ENCODE measurements at regions of chr17 and their contacts with region 1.

Region 1: DNA sequence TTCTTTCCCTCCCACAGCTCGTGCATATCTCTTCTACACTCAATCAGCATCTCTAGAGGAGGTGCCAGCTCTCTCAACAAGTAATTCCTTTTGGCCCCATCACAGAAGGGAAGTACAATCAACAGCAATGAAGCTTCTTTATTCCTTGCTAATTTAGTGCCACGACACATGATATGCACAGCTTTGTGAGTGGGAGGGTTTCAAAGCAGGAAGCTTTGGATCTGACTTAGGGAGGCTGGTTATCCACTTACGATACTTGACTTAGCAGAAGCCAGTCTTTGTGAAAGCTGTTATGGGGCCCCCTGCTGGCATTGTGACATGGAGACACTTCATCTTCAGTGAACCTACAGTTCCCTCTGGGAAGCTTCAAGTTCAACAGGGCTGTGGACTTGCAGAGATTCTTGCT is 81.0 kb downstream of the TMEM100 start:
- DNase-seq: no peak
- ATAC-seq: no peak
- H3K4me3 ChIP-seq: no peak overlapping the region
- H3K27ac ChIP-seq: no peak overlapping the region
- H3K4me1 ChIP-seq: no peaks in the 10 kb centered on the region
- H3K27me3 ChIP-seq: no peaks in the 10 kb centered on the region
- CTCF ChIP-seq: peak; percentile 64

Region 2: DNA sequence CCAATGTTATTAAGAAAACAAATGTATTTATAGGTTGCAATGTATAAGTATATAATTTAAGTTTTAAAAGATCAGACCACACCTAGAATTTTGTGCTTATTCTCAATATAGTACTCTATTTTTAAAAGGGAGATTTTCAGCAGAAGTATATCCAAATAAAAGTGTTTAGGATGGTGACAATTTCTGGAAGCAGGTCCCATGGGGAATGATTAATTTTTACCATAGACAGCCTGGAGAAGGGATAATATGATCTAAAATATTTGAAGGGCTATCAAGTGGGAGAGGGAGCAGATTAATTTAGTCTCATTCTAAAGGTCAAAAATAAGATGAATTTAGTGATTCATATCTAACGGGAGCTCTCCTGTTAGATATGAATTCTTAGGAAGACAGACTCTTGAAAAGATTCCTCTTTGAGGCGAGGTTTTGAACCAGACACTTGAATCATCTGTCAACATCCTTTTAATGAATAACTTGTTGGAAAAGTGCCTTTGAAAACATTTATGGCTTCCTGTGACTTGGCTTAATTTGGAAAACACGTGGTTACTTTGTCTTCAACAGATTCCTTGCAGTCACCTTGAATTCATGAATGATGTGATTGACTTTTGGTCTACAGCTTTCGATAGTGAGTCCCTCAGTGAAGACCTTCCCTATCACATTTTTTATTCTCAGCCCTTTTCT is 101.1 kb before region 1 on chr17:
- CTCF ChIA-PET with region 1: no interaction called
- POLR2A ChIA-PET with region 1: no interaction called
- in situ Hi-C with region 1: no loop called
- intact Hi-C with region 1: no loop called
- DNase-seq: no peak
- ATAC-seq: no peak
- H3K4me3 ChIP-seq: no peak overlapping the region
- H3K27ac ChIP-seq: no peak overlapping the region
- H3K4me1 ChIP-seq: no peaks in the 10 kb centered on the region
- H3K27me3 ChIP-seq: no peaks in the 10 kb centered on the region
- CTCF ChIP-seq: no peak

Region 3: DNA sequence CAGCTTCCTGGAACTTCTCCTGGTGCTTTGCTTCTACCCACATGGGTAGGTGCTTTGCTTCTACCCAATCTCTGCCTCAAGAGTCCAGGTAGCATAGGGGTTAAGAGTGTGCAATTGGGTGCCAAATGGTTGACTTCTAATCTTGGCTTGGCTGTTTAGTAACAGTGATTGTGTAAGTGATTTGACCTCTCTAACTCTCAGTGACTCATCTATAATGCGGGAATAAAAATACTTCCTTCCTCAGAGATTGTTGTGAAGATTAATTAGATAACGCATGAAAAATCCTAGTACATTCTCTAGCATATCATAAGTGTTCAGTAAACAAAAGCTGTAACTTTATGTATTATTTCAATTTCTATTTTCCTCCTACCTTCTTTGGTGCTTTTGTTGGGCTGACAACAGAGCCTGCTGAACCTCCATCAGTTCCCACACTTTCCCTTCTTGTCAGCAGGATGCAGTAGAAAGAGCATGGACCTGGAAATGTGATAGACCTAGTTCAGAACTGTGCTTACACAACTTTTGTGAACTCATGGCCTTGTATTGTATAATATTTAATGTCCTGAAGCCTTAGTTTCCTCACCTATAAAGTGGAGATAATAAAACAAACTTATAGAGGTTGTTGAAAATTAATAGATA is 57.5 kb before region 1 on chr17:
- CTCF ChIA-PET with region 1: no interaction called
- POLR2A ChIA-PET with region 1: no interaction called
- in situ Hi-C with region 1: no loop called
- intact Hi-C with region 1: no loop called
- DNase-seq: no peak
- ATAC-seq: no peak
- H3K4me3 ChIP-seq: no peak overlapping the region
- H3K27ac ChIP-seq: no peak overlapping the region
- H3K4me1 ChIP-seq: no peaks in the 10 kb centered on the region
- H3K27me3 ChIP-seq: no peaks in the 10 kb centered on the region
- CTCF ChIP-seq: no peak

Region 4: DNA sequence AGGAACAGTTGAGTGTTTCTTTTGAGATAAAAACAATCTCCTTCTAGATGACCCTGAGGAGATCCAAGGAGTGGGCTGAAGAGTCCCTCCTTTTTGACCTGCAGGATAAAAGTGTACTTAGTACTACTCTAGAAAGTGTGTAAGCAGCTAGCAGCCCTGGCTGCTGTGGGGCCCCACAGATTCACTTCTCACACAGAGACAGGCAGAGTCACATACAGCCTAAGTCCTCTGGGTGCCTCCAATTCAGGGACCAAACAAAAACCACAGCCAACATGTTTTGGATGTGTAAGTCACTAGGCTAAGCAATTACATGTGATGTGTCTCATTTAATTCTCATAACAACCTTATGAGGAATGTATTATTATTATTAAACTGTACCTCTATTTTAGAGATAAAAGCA is 16.2 kb before region 1 on chr17:
- CTCF ChIA-PET with region 1: no interaction called
- POLR2A ChIA-PET with region 1: no interaction called
- in situ Hi-C with region 1: no loop called
- intact Hi-C with region 1: no loop called
- DNase-seq: no peak
- ATAC-seq: no peak
- H3K4me3 ChIP-seq: no peak overlapping the region
- H3K27ac ChIP-seq: no peak overlapping the region
- H3K4me1 ChIP-seq: no peaks in the 10 kb centered on the region
- H3K27me3 ChIP-seq: no peaks in the 10 kb centered on the region
- CTCF ChIP-seq: no peak

Region 5: DNA sequence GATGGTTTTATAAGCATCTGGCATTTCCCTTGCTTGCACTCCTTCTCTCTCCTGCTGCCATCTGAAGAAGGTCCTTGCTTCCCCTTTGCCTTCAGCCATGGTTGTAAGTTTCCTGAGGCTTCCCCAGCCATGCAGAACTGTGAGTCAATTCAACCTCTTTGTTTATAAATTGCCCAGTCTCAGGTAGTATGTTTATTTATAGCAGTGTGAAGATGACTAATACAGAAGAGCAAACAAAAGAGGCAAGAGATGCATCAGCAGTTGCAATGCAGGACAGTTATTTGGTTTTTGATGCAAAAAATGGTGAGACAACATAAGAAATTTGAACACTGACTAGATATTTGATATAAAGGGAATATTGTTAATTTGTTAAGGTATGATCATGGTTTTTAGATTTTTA is 64.2 kb after region 1 on chr17:
- CTCF ChIA-PET with region 1: no interaction called
- POLR2A ChIA-PET with region 1: no interaction called
- in situ Hi-C with region 1: no loop called
- intact Hi-C with region 1: no loop called
- DNase-seq: peak; percentile 56
- ATAC-seq: peak; percentile 86
- H3K4me3 ChIP-seq: no peak overlapping the region
- H3K27ac ChIP-seq: peak overlapping the region; percentile 75
- H3K4me1 ChIP-seq: peaks cover 29% of the 10 kb centered on the region
- H3K27me3 ChIP-seq: no peaks in the 10 kb centered on the region
- CTCF ChIP-seq: no peak

Region 6: GRCh38 chr17:56471696-56472095 is 830.0 kb after region 1 on chr17:
- CTCF ChIA-PET with region 1: interaction called, 11 read pairs
- POLR2A ChIA-PET with region 1: no interaction called
- in situ Hi-C with region 1: no loop called
- intact Hi-C with region 1: no loop called
- DNase-seq: no peak
- ATAC-seq: no peak
- H3K4me3 ChIP-seq: no peak overlapping the region
- H3K27ac ChIP-seq: no peak overlapping the region
- H3K4me1 ChIP-seq: no peaks in the 10 kb centered on the region
- H3K27me3 ChIP-seq: no peaks in the 10 kb centered on the region
- CTCF ChIP-seq: no peak